ENCODE measurements at regions of chr2 and their contacts with region 1.

Region 1: GRCh38 chr2:143792602-143793001 is 663.4 kb downstream of the ARHGAP15 start:
- DNase-seq: no peak
- H3K4me3 ChIP-seq: no peak overlapping the region
- H3K27ac ChIP-seq: no peak overlapping the region
- H3K4me1 ChIP-seq: no peaks in the 10 kb centered on the region
- H3K27me3 ChIP-seq: no peaks in the 10 kb centered on the region
- CTCF ChIP-seq: no peak
- POLR2A ChIP-seq: no peak

Region 2: DNA sequence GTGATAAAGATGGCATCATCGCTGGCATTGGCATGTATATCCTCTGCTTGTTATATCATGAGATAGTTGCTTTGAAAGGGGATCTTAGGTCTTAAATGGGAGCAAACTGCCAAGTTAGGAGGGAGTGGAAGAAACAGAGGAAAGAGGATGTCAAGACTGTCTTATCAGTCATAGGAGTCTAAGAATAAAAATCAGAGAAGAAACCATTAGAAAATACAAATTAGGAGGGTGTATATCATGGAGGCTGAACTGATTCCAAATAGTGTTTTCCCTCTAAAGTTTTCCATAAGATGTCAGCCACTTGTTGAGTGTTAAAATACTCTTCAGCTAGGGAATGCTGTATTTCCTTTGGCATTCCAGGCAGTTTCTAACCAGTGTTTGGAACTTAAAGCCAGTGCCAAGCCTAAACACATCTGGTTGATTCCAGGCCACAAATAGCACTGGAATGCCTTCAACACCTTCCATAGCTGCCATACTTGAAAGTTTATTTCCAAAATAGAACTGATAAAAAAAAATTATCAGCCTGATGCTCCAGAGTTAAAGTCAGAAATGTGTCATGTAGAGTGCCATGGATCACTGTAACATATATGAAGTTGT is 597.9 kb after region 1 on chr2:
- intact Hi-C with region 1: loop called (anchors 5 kb)
- DNase-seq: no peak
- H3K4me3 ChIP-seq: no peak overlapping the region
- H3K27ac ChIP-seq: no peak overlapping the region
- H3K4me1 ChIP-seq: no peaks in the 10 kb centered on the region
- H3K27me3 ChIP-seq: no peaks in the 10 kb centered on the region
- CTCF ChIP-seq: no peak
- POLR2A ChIP-seq: no peak

Measured in breast epithelium (tissue), 4 donors.